Caco-2 (cell line): ENCODE measurements at regions of chr17 and their contacts with region 1.

Region 1: GRCh38 chr17:17729620-17730249 is 48.5 kb downstream of the RAI1 start:
- DNase-seq: peak; percentile 71 to 77
- H3K4me3 ChIP-seq: no peak overlapping the region
- H3K4me3 Mint-ChIP-seq: no peak overlapping the region
- H3K27ac Mint-ChIP-seq: no peak overlapping the region
- H3K4me1 ChIP-seq: no peaks in the 10 kb centered on the region
- H3K4me1 Mint-ChIP-seq: peaks cover 13% of the 10 kb centered on the region
- H3K27me3 ChIP-seq: no peaks in the 10 kb centered on the region
- H3K27me3 Mint-ChIP-seq: no peaks in the 10 kb centered on the region
- CTCF ChIP-seq: peak; percentile 83 to 86

Region 2: GRCh38 chr17:17859909-17860765 is 130.4 kb after region 1 on chr17:
- CTCF ChIA-PET with region 1: no interaction called
- POLR2A ChIA-PET with region 1: no interaction called
- intact Hi-C with region 1: loop called (anchors 10 kb)
- DNase-seq: peak; percentile 70 to 78
- H3K4me3 ChIP-seq: no peak overlapping the region
- H3K4me3 Mint-ChIP-seq: no peak overlapping the region
- H3K27ac Mint-ChIP-seq: no peak overlapping the region
- H3K4me1 ChIP-seq: peaks cover 3% of the 10 kb centered on the region; the same call in 1 of the 2 replicates
- H3K4me1 Mint-ChIP-seq: peaks cover 6% of the 10 kb centered on the region
- H3K27me3 ChIP-seq: no peaks in the 10 kb centered on the region
- H3K27me3 Mint-ChIP-seq: no peaks in the 10 kb centered on the region
- CTCF ChIP-seq: peak; percentile 98